ENCODE measurements at regions of chr2 and their contacts with region 1.

Region 1: DNA sequence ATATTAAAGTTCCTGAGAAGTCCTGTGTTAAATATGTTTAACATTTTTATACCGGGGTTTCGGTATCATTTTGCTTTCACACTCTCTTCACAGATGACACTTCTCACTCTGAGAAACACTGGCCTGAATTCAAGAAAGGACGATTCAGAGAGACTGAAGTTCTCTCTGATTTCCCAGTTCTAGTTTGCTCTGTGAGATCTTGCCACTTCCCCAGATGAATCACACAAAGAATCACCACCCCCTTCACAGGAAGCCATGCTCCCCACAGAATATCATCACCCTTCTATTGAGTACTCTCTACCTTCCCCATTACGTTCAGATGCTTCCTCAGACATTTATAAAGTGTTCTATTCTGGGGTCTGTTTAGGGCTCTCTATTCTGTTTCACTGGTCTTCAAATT is 16.1 kb upstream of the CD207 start:
- DNase-seq: peak; percentile 79
- H3K4me3 Mint-ChIP-seq: peak overlapping the region; percentile 12
- H3K27ac Mint-ChIP-seq: peak overlapping the region; percentile 69
- H3K4me1 Mint-ChIP-seq: peaks cover 23% of the 10 kb centered on the region
- H3K27me3 Mint-ChIP-seq: peaks cover 2% of the 10 kb centered on the region

Region 2: DNA sequence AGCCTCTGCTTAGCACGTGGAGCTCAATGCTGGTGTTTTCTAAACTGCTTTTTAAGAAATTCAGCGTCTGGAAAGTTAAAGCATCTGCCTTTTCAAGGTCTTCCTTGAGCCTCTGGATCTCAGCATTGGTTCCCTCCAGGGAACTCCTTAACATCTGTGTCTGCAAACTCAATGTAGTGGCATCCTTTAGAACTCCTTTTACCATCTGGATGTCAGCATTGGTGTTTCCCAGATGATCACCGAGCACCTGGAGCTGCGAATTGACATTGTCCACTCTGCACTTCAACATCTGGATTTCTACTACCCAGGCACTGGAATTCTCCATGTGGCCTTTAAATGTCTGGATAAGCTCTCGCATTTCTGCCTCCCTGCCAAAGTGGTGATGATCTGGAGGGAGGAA is 35.0 kb before region 1 on chr2:
- intact Hi-C with region 1: no loop called
- DNase-seq: no peak
- H3K4me3 Mint-ChIP-seq: no peak overlapping the region
- H3K27ac Mint-ChIP-seq: no peak overlapping the region
- H3K4me1 Mint-ChIP-seq: peaks cover 4% of the 10 kb centered on the region
- H3K27me3 Mint-ChIP-seq: peaks cover 3% of the 10 kb centered on the region

Region 3: GRCh38 chr2:70826696-70827350 is 24.9 kb before region 1 on chr2:
- intact Hi-C with region 1: loop called (anchors 1 kb)
- DNase-seq: no peak
- H3K4me3 Mint-ChIP-seq: peak overlapping the region; percentile 43
- H3K27ac Mint-ChIP-seq: peak overlapping the region; percentile 89
- H3K4me1 Mint-ChIP-seq: peaks cover 23% of the 10 kb centered on the region
- H3K27me3 Mint-ChIP-seq: no peaks in the 10 kb centered on the region

Region 4: GRCh38 chr2:70871398-70872211 is 19.9 kb after region 1 on chr2:
- intact Hi-C with region 1: no loop called
- DNase-seq: peak; percentile 94
- H3K4me3 Mint-ChIP-seq: peak overlapping the region; percentile 49
- H3K27ac Mint-ChIP-seq: no peak overlapping the region
- H3K4me1 Mint-ChIP-seq: peaks cover 6% of the 10 kb centered on the region
- H3K27me3 Mint-ChIP-seq: peaks cover 28% of the 10 kb centered on the region